ENCODE measurements at regions of chr15 and their contacts with region 1.

Region 1: GRCh38 chr15:101198800-101199199 is 53.0 kb downstream of the CHSY1 start:
- DNase-seq: no peak
- H3K4me3 ChIP-seq: no peak overlapping the region
- H3K27ac ChIP-seq: no peak overlapping the region
- H3K4me1 ChIP-seq: peaks cover 27% of the 10 kb centered on the region
- CTCF ChIP-seq: no peak

Region 2: GRCh38 chr15:101047301-101047781 is 151.5 kb before region 1 on chr15:
- CTCF ChIA-PET with region 1: no interaction called
- POLR2A ChIA-PET with region 1: no interaction called
- intact Hi-C with region 1: no loop called
- DNase-seq: no peak
- H3K4me3 ChIP-seq: no peak overlapping the region
- H3K27ac ChIP-seq: no peak overlapping the region
- H3K4me1 ChIP-seq: no peaks in the 10 kb centered on the region
- CTCF ChIP-seq: no peak

Region 3: GRCh38 chr15:101242160-101242998 is 43.6 kb after region 1 on chr15:
- CTCF ChIA-PET with region 1: no interaction called
- POLR2A ChIA-PET with region 1: interaction called, 4 read pairs
- intact Hi-C with region 1: loop called (anchors 2 kb)
- DNase-seq: peak; percentile 73
- H3K4me3 ChIP-seq: peak overlapping the region; percentile 48
- H3K27ac ChIP-seq: peak overlapping the region; percentile 51
- H3K4me1 ChIP-seq: peaks cover 48% of the 10 kb centered on the region
- CTCF ChIP-seq: no peak

Region 4: DNA sequence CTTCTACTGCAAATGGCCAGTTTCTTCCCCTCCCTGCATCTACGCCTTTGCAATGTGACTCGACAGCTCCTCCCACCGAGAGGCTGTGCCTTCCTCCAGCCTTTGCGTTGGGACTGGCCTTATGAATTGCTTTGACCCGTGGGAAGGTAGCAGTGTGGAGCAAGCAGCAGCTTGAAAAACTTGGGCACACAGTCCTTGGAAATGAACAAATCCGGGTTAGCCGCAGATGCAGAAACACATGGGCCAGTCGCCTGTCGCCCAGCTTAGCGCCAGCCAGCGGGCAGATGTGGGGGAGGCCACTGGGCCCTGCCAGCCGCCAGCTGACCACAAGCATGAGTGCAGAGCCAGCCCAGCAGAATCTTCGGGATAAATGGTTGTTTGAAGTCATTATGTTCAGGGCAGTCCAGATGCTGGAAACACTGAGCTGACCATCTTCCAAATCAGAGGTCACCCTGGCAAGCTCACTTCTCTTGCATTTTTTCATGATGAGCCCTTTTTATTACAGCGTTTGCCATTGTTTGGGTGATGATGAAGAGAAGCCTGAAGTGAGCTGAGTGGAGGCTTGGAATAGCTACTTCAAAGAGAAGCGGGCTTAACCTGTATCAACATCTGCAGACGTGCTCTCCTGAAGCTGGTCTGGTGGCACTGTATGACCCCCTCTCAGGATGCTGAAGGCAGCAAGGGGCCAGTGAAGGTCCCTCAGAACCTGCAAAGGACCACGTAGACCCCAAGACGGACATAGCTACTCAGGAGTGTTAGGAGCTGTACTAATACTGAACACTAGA is 68.7 kb after region 1 on chr15:
- CTCF ChIA-PET with region 1: no interaction called
- POLR2A ChIA-PET with region 1: no interaction called
- intact Hi-C with region 1: no loop called
- DNase-seq: no peak
- H3K4me3 ChIP-seq: no peak overlapping the region
- H3K27ac ChIP-seq: no peak overlapping the region
- H3K4me1 ChIP-seq: no peaks in the 10 kb centered on the region
- CTCF ChIP-seq: no peak